Heart left ventricle (tissue), 16 donors: ENCODE measurements at regions of chr10 and their contacts with region 1.

Region 1: DNA sequence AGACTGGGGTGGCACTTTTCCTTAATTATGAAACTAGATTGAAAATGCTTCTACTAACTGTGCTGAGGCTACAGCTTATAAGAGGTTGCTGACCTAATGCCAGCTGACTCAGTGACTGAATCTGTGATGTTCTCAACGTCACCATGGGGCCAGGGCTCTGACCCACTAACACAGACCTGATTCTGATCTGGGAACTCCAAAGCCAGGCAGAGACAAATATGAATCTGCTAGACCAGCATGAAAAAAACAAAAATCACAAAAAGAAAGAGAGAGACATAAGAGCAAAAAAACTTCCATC is 16.1 kb downstream of the USP6NL start:
- DNase-seq: peak in 1 of 5 donors; percentile 38
- ATAC-seq: peak in 2 of 4 donors; percentile 42 to 76
- H3K4me3 ChIP-seq: no peak overlapping the region
- H3K27ac ChIP-seq: peak overlapping the region in 1 of 12 donors; percentile 59
- H3K4me1 ChIP-seq: peaks cover 0 to 21% (median 5%) of the 10 kb centered on the region in 12 donors
- H3K27me3 ChIP-seq: no peaks in the 10 kb centered on the region
- CTCF ChIP-seq: no peak
- POLR2A ChIP-seq: no peak

Region 2: GRCh38 chr10:11525503-11525902 is 69.8 kb before region 1 on chr10:
- intact Hi-C with region 1: loop called in 1 of 10 experiments (anchors 5 kb)
- DNase-seq: peak; percentile 62 to 78 (median 70)
- ATAC-seq: peak; percentile 46 to 79 (median 77)
- H3K4me3 ChIP-seq: peak overlapping the region in 1 of 12 donors; percentile 6
- H3K27ac ChIP-seq: peak overlapping the region in 6 of 12 donors; percentile 19 to 64 (median 48)
- H3K4me1 ChIP-seq: peaks cover 0 to 50% (median 27%) of the 10 kb centered on the region in 12 donors
- H3K27me3 ChIP-seq: no peaks in the 10 kb centered on the region
- CTCF ChIP-seq: no peak
- POLR2A ChIP-seq: no peak